ENCODE measurements at regions of chr1 and their contacts with region 1.

Region 1: GRCh38 chr1:102434421-102434820 is 437.7 kb upstream of the OLFM3 start:
- DNase-seq: peak; percentile 11
- H3K4me3 ChIP-seq: no peak overlapping the region
- H3K27ac ChIP-seq: no peak overlapping the region
- H3K4me1 ChIP-seq: no peaks in the 10 kb centered on the region
- H3K27me3 ChIP-seq: no peaks in the 10 kb centered on the region
- CTCF ChIP-seq: peak; percentile 45 to 53
- POLR2A ChIP-seq: no peak

Region 2: DNA sequence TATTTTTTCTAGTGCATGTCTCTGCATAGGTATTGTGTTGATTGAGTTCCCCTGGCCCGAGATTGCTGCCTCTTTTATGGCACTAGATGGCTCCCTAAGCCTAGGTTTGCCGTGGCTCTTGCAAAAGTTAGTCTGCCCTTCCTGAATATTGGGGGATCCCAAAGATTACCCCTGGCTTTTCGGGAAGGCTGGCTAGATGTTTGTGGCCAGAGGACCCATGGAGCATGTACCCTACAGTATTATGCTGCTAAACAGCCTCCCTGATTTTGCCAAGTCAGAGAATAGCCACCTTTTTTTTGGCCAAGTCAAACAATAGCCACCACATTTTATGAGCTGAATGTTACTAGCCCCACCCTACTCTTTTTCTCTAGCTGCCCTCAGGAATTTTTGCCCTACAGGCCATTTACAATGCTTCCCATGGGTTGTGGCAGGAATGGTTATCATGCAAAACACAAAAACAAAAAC is 780.9 kb before region 1 on chr1:
- CTCF ChIA-PET with region 1: interaction called, 3 read pairs
- POLR2A ChIA-PET with region 1: no interaction called
- dilution Hi-C with region 1: no loop called
- intact Hi-C with region 1: loop called (anchors 1 kb)
- DNase-seq: peak; percentile 39
- H3K4me3 ChIP-seq: no peak overlapping the region
- H3K27ac ChIP-seq: no peak overlapping the region
- H3K4me1 ChIP-seq: no peaks in the 10 kb centered on the region
- H3K27me3 ChIP-seq: peaks cover 2 to 8% of the 10 kb centered on the region in 2 experiments
- CTCF ChIP-seq: peak; percentile 48 to 54
- POLR2A ChIP-seq: no peak

Region 3: DNA sequence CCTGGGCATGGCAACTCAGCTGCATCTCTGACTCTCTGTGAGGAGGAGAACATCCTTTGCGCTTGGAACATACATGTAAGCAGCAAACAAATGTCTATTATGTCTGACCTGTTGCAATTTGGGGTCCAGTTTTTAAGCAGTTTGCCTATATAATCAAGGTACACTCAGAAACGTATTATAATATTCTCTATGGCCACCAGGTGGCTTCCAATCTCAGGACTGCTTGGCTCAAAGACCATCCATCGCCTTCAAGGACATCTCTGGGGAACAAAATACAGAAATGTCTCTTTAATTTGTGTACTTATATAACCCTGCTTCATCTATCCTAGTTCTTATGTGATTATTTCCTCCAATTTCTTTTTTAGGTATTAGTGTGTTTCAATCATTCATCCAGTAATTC is 664.9 kb before region 1 on chr1:
- CTCF ChIA-PET with region 1: no interaction called
- POLR2A ChIA-PET with region 1: no interaction called
- dilution Hi-C with region 1: no loop called
- intact Hi-C with region 1: loop called (anchors 1 kb)
- DNase-seq: peak; percentile 32
- H3K4me3 ChIP-seq: no peak overlapping the region
- H3K27ac ChIP-seq: no peak overlapping the region
- H3K4me1 ChIP-seq: no peaks in the 10 kb centered on the region
- H3K27me3 ChIP-seq: peaks cover 0 to 3% of the 10 kb centered on the region in 2 experiments
- CTCF ChIP-seq: peak; percentile 27 to 40
- POLR2A ChIP-seq: no peak

Region 4: DNA sequence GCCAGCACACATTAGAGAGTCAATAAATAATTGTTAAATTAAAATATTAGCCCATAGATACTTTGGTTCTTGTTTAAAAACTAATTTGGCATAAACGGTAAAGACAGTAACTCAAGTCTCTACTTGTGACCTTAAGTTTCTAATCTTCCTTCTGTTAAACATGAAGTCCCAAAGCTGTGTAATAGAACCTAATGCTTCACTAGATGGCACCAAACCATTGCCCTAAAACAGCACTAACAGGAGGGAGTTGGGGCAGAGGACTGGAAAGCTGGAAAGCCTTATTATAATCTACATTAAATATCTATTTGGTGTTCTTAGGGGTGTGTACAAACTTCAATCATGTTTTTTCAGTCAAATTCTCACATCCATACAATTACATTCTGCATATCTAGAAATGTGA is 614.4 kb before region 1 on chr1:
- CTCF ChIA-PET with region 1: interaction called, 3 read pairs
- POLR2A ChIA-PET with region 1: no interaction called
- dilution Hi-C with region 1: no loop called
- intact Hi-C with region 1: loop called (anchors 1 kb)
- DNase-seq: peak; percentile 12
- H3K4me3 ChIP-seq: no peak overlapping the region
- H3K27ac ChIP-seq: no peak overlapping the region
- H3K4me1 ChIP-seq: no peaks in the 10 kb centered on the region
- H3K27me3 ChIP-seq: peaks cover 0 to 2% of the 10 kb centered on the region in 2 experiments
- CTCF ChIP-seq: no peak
- POLR2A ChIP-seq: no peak

Region 5: DNA sequence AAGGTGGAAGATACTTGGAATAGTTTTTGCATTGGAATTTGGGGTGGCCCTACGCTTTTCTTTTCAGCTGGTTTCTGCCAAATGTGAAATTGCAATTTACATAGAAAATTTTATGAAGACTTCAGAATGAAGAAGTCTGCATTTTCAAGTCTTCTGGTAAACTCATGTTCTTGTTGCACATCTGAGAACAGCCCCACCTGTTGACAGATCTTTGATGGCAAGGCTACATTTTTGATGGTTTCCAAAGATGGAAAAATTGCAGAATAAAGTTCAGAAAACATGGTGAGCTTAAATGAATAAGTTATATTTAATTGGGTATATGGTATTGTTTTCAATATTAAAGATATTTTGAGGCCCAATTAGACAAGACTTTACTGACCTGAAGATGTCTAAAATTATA is 463.1 kb before region 1 on chr1:
- CTCF ChIA-PET with region 1: no interaction called
- POLR2A ChIA-PET with region 1: no interaction called
- dilution Hi-C with region 1: no loop called
- intact Hi-C with region 1: no loop called
- DNase-seq: no peak
- H3K4me3 ChIP-seq: no peak overlapping the region
- H3K27ac ChIP-seq: no peak overlapping the region
- H3K4me1 ChIP-seq: no peaks in the 10 kb centered on the region
- H3K27me3 ChIP-seq: no peaks in the 10 kb centered on the region
- CTCF ChIP-seq: no peak
- POLR2A ChIP-seq: no peak

Measured in endothelial cell of umbilical vein (primary cell).